Mammary epithelial cell (primary cell): ENCODE measurements at regions of chr4 and their contacts with region 1.

Region 1: DNA sequence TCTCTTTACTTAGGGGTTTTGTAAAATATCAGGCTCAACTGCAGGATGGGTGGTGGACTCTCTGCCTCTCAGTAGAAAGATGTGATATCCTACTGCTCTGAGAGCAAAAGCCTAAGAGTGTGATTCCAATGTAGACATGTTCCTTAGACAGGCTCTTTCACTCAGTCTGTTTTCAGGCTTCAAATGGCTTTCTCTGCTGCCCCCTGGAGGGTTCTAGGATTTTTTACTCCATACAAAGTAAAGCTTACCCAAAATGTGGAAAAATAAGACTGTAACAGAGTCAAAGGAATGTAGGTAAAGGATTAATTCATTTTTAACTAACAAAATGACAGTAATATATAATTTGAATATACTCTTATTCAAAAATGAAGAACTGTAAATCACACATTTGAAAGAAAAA is 32.1 kb downstream of the ZGRF1 start:
- DNase-seq: peak; percentile 35
- H3K4me3 ChIP-seq: no peak overlapping the region
- H3K27ac ChIP-seq: no peak overlapping the region
- H3K4me1 ChIP-seq: no peaks in the 10 kb centered on the region
- H3K27me3 ChIP-seq: no peaks in the 10 kb centered on the region
- CTCF ChIP-seq: peak; percentile 45 to 73

Region 2: GRCh38 chr4:112075129-112075753 is 529.3 kb before region 1 on chr4:
- CTCF ChIA-PET with region 1: no interaction called
- dilution Hi-C with region 1: no loop called
- in situ Hi-C with region 1: no loop called
- intact Hi-C with region 1: loop called (anchors 5 kb)
- DNase-seq: peak; percentile 59
- H3K4me3 ChIP-seq: no peak overlapping the region
- H3K27ac ChIP-seq: no peak overlapping the region
- H3K4me1 ChIP-seq: peaks cover 4% of the 10 kb centered on the region
- H3K27me3 ChIP-seq: no peaks in the 10 kb centered on the region
- CTCF ChIP-seq: peak; percentile 74 to 81

Region 3: GRCh38 chr4:112099701-112100297 is 504.8 kb before region 1 on chr4:
- CTCF ChIA-PET with region 1: no interaction called
- dilution Hi-C with region 1: no loop called
- in situ Hi-C with region 1: no loop called
- intact Hi-C with region 1: loop called (anchors 2 kb)
- DNase-seq: peak; percentile 37
- H3K4me3 ChIP-seq: no peak overlapping the region
- H3K27ac ChIP-seq: no peak overlapping the region
- H3K4me1 ChIP-seq: no peaks in the 10 kb centered on the region
- H3K27me3 ChIP-seq: no peaks in the 10 kb centered on the region
- CTCF ChIP-seq: peak; percentile 55 to 56

Region 4: GRCh38 chr4:112214390-112215264 is 390.0 kb before region 1 on chr4:
- CTCF ChIA-PET with region 1: interaction called, 3 read pairs
- dilution Hi-C with region 1: no loop called
- in situ Hi-C with region 1: no loop called
- intact Hi-C with region 1: loop called (anchors 1 kb)
- DNase-seq: peak; percentile 21
- H3K4me3 ChIP-seq: no peak overlapping the region
- H3K27ac ChIP-seq: peak overlapping the region; percentile 5
- H3K4me1 ChIP-seq: peaks cover 12% of the 10 kb centered on the region
- H3K27me3 ChIP-seq: no peaks in the 10 kb centered on the region
- CTCF ChIP-seq: peak; percentile 31 to 57

Region 5: GRCh38 chr4:112327965-112328733 is 276.4 kb before region 1 on chr4:
- CTCF ChIA-PET with region 1: no interaction called
- dilution Hi-C with region 1: no loop called
- in situ Hi-C with region 1: loop called (anchors 10 kb)
- intact Hi-C with region 1: loop called (anchors 1 kb)
- DNase-seq: peak; percentile 45
- H3K4me3 ChIP-seq: no peak overlapping the region
- H3K27ac ChIP-seq: no peak overlapping the region
- H3K4me1 ChIP-seq: no peaks in the 10 kb centered on the region
- H3K27me3 ChIP-seq: no peaks in the 10 kb centered on the region
- CTCF ChIP-seq: peak; percentile 45 to 54

Region 6: GRCh38 chr4:112348488-112349158 is 256.0 kb before region 1 on chr4:
- CTCF ChIA-PET with region 1: interaction called, 3 read pairs
- dilution Hi-C with region 1: no loop called
- in situ Hi-C with region 1: no loop called
- intact Hi-C with region 1: loop called (anchors 1 kb)
- DNase-seq: peak; percentile 76
- H3K4me3 ChIP-seq: peak overlapping the region in 2 of 3 experiments; percentile 25 to 36
- H3K27ac ChIP-seq: no peak overlapping the region
- H3K4me1 ChIP-seq: peaks cover 8% of the 10 kb centered on the region
- H3K27me3 ChIP-seq: no peaks in the 10 kb centered on the region
- CTCF ChIP-seq: peak; percentile 31 to 65

Region 7: DNA sequence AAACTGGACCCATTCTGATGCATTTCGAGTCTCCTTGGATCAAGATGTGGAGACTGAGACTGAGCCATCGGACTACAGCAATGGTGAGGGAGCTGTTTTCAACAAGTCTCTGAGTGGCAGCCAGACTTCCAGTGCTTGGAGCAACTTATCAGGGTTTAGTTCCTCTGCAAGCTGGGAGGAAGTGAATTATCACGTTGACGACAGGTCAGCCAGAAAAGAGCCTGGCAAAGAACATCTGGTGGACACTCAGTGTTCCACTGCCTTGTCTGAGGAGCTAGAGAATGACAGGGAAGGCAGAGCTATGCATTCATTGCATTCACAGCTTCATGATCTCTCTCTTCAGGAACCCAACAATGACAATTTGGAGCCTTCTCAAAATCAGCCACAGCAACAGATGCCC is 173.4 kb before region 1 on chr4:
- CTCF ChIA-PET with region 1: no interaction called
- dilution Hi-C with region 1: no loop called
- in situ Hi-C with region 1: no loop called
- intact Hi-C with region 1: no loop called
- DNase-seq: no peak
- H3K4me3 ChIP-seq: no peak overlapping the region
- H3K27ac ChIP-seq: no peak overlapping the region
- H3K4me1 ChIP-seq: no peaks in the 10 kb centered on the region
- H3K27me3 ChIP-seq: no peaks in the 10 kb centered on the region
- CTCF ChIP-seq: no peak